ENCODE measurements at regions of chr12 and their contacts with region 1.

Region 1: DNA sequence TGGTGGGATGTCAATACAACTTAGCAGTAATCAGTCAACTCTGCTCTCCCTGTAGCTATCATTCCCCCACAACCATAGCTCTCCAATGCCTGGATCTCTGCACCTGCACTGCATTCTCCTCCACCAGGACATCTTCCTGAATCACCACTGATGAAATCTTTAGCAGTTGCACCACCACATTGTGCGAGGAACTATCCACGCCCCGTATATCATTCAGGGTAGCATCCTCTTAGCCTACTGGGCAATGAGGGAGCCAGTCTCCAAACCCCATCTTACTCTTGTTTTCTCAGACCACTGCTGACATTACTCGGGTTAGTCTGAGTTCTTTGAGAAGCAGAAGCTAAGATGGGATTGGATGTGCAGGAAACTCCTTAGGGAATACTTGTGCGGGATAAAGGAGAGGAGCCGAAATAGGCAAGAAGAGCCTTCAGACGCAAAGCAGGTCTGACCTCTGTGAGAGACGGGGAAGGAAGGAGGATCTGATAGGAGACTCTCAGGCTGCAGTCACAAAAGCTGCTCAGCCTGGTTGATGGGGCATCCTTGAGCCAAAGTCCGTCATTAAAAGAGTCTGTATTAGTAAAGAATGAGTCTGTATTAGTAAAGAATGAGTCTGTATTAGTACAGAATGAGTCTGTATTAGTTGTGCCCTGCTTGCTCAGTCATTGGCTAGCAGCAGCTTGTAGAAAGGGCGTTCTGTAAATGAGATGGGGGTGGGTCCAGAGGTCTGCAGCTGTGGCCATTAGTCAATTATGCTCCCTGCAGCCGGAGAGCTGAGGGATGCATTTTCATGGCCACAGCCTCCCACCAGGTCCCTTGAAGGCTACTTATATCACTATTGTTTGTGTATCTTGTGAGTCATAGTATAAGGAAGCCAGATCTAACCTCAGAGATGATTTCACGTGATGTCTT is 49.6 kb upstream of the RASSF3 start:
- DNase-seq: no peak
- ATAC-seq: peak in 1 of 2 donors; percentile 32
- H3K4me3 ChIP-seq: no peak overlapping the region
- H3K27ac ChIP-seq: no peak overlapping the region
- H3K4me1 ChIP-seq: peaks cover 5% of the 10 kb centered on the region
- H3K27me3 ChIP-seq: no peaks in the 10 kb centered on the region
- CTCF ChIP-seq: no peak

Region 2: GRCh38 chr12:64610149-64610678 is 49.6 kb after region 1 on chr12 and contains the start of gene RASSF3:
- intact Hi-C with region 1: loop called (anchors 10 kb)
- DNase-seq: peak; percentile 87
- ATAC-seq: peak; percentile 88
- H3K4me3 ChIP-seq: peak within 1 kb of the TSS; percentile 96
- H3K27ac ChIP-seq: peak within 1 kb of the TSS; percentile 93
- H3K4me1 ChIP-seq: peaks cover 32% of the 10 kb centered on the region
- H3K27me3 ChIP-seq: no peaks in the 10 kb centered on the region
- CTCF ChIP-seq: no peak
- total RNA-seq, gene RASSF3: 82.7 TPM

Measured in lower lobe of right lung (tissue), 2 donors.